Adrenal gland (tissue), 19 donors: ENCODE measurements at regions of chr17 and their contacts with region 1.

Region 1: DNA sequence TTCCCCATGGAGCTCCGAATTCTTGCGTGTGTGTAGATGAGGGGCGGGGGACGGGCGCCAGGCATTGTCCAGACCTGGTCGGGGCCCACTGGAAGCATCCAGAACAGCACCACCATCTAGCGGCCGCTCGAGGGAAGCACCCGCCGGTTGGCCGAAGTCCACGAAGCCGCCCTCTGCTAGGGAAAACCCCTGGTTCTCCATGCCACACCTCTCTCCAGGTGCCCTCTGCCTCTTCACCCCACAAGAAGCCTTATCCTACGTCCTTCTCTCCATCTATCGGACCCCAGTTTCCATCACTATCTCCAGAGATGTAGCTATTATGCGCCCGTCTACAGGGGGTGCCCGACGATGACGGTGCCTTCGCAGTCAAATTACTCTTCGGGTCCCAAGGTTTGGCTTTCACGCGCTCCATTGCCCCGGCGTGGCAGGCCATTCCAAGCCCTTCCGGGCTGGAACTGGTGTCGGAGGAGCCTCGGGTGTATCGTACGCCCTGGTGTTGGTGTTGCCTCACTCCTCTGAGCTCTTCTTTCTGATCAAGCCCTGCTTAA is 617 bp upstream of the SENP3 start:
- DNase-seq: peak; percentile 90 to 97 (median 95)
- H3K4me3 ChIP-seq: peak overlapping the region; percentile 28 to 74 (median 57)
- H3K27ac ChIP-seq: peak overlapping the region; percentile 75 to 97 (median 92)
- H3K4me1 ChIP-seq: peaks cover 35 to 58% of the 10 kb centered on the region in 2 donors
- H3K27me3 ChIP-seq: no peaks in the 10 kb centered on the region
- CTCF ChIP-seq: peak; percentile 70 to 96 (median 92)
- POLR2A ChIP-seq: no peak

Region 2: GRCh38 chr17:7367083-7367482 is 194.0 kb before region 1 on chr17:
- intact Hi-C with region 1: no loop called
- DNase-seq: no peak
- H3K4me3 ChIP-seq: no peak overlapping the region
- H3K27ac ChIP-seq: no peak overlapping the region
- H3K4me1 ChIP-seq: no peaks in the 10 kb centered on the region
- H3K27me3 ChIP-seq: no peaks in the 10 kb centered on the region
- CTCF ChIP-seq: no peak
- POLR2A ChIP-seq: no peak

Region 3: DNA sequence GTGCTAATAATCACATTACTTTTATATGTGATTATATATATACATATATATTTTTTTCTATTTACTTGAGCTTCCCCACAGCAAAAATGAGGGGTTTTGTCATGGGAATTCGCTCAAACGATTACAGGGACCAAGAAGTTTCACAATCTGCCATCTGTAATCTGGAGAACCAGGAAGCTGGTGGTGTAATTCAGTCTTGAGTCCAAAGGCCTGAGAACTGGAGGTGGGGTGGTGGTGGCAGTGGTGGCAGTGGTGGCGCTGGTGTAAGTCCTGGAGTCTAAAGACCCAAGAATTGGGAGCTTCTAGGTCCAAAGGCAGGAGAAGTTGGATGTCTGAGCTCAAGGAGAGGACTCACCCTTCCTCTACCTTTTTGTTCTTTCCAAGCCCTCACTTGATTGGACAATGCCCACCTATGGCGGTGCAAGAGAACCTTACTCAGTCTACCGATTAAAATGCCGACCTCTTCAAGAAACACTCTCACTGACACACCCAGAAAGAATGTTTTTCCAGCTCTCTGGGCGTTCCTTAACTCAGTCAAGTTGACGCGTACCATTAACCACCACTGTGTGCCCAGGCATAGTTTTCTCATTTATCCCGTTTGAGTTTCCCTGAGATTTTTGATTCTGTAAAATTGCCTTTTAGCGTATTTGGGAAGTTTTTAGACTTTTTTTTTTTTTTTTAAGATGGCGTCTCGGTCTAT is 45.0 kb before region 1 on chr17:
- intact Hi-C with region 1: loop called (anchors 2 to 5 kb)
- DNase-seq: no peak
- H3K4me3 ChIP-seq: no peak overlapping the region
- H3K27ac ChIP-seq: no peak overlapping the region
- H3K4me1 ChIP-seq: no peaks in the 10 kb centered on the region
- H3K27me3 ChIP-seq: no peaks in the 10 kb centered on the region
- CTCF ChIP-seq: no peak
- POLR2A ChIP-seq: no peak